Activated CD8-positive, alpha-beta T cell treated with anti-CD3 and anti-CD28 coated beads for 36 hours (primary cell): ENCODE measurements at regions of chr14 and their contacts with region 1.

Region 1: DNA sequence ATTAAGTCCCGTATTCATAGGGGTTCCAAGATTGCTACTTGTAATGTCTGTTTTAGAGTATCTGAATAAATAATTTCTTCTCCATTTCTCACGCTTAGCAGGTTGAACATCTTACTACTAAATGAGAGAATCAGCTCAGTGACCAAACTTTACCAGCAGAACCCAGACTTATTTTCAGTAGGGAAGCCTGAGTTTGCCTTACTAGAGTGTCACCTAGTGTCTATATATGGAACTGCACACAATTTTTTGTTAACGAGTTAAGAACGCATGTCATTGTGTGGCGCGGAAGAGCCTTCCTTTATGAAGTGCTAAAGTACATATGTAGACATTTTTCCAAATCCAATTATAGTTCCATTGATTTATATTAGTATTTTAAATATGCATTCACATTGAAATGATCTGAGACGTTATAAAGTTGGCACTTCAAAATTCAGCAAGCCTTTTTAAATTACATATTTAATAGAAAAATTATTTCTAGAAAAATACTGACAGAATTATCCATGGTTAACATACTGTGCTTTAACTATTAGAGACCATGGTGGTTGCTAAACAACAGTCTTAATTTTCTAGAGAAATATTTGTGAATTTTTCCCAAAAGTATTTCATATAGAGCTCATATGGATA is 88.3 kb downstream of the RPS29 start:
- DNase-seq: peak; percentile 14
- ATAC-seq: peak; percentile 79
- H3K4me3 Mint-ChIP-seq: no peak overlapping the region
- H3K27ac Mint-ChIP-seq: no peak overlapping the region
- H3K4me1 Mint-ChIP-seq: no peaks in the 10 kb centered on the region
- H3K27me3 Mint-ChIP-seq: peaks cover 9% of the 10 kb centered on the region
- CTCF ChIP-seq: peak; percentile 87

Region 2: GRCh38 chr14:49160983-49161382 is 336.9 kb before region 1 on chr14:
- CTCF ChIA-PET with region 1: no interaction called
- POLR2A ChIA-PET with region 1: no interaction called
- intact Hi-C with region 1: no loop called
- DNase-seq: no peak
- ATAC-seq: no peak
- H3K4me3 Mint-ChIP-seq: no peak overlapping the region
- H3K27ac Mint-ChIP-seq: no peak overlapping the region
- H3K4me1 Mint-ChIP-seq: peaks cover 3% of the 10 kb centered on the region
- H3K27me3 Mint-ChIP-seq: no peaks in the 10 kb centered on the region
- CTCF ChIP-seq: no peak

Region 3: GRCh38 chr14:49483268-49483667 is 14.6 kb before region 1 on chr14:
- CTCF ChIA-PET with region 1: interaction called, 20 read pairs
- POLR2A ChIA-PET with region 1: no interaction called
- intact Hi-C with region 1: no loop called
- DNase-seq: no peak
- ATAC-seq: no peak
- H3K4me3 Mint-ChIP-seq: no peak overlapping the region
- H3K27ac Mint-ChIP-seq: no peak overlapping the region
- H3K4me1 Mint-ChIP-seq: peaks cover 5% of the 10 kb centered on the region
- H3K27me3 Mint-ChIP-seq: no peaks in the 10 kb centered on the region
- CTCF ChIP-seq: no peak

Region 4: GRCh38 chr14:49512147-49512551 is 14.3 kb after region 1 on chr14:
- CTCF ChIA-PET with region 1: interaction called, 10 read pairs
- POLR2A ChIA-PET with region 1: no interaction called
- intact Hi-C with region 1: no loop called
- DNase-seq: no peak
- ATAC-seq: no peak
- H3K4me3 Mint-ChIP-seq: no peak overlapping the region
- H3K27ac Mint-ChIP-seq: no peak overlapping the region
- H3K4me1 Mint-ChIP-seq: no peaks in the 10 kb centered on the region
- H3K27me3 Mint-ChIP-seq: peaks cover 3% of the 10 kb centered on the region
- CTCF ChIP-seq: no peak

Region 5: GRCh38 chr14:49528049-49528448 is 30.2 kb after region 1 on chr14:
- CTCF ChIA-PET with region 1: no interaction called
- POLR2A ChIA-PET with region 1: no interaction called
- intact Hi-C with region 1: no loop called
- DNase-seq: no peak
- ATAC-seq: no peak
- H3K4me3 Mint-ChIP-seq: no peak overlapping the region
- H3K27ac Mint-ChIP-seq: no peak overlapping the region
- H3K4me1 Mint-ChIP-seq: no peaks in the 10 kb centered on the region
- H3K27me3 Mint-ChIP-seq: no peaks in the 10 kb centered on the region
- CTCF ChIP-seq: no peak

Region 6: GRCh38 chr14:49538926-49539325 is 41.1 kb after region 1 on chr14:
- CTCF ChIA-PET with region 1: no interaction called
- POLR2A ChIA-PET with region 1: no interaction called
- intact Hi-C with region 1: no loop called
- DNase-seq: no peak
- ATAC-seq: no peak
- H3K4me3 Mint-ChIP-seq: no peak overlapping the region
- H3K27ac Mint-ChIP-seq: no peak overlapping the region
- H3K4me1 Mint-ChIP-seq: no peaks in the 10 kb centered on the region
- H3K27me3 Mint-ChIP-seq: no peaks in the 10 kb centered on the region
- CTCF ChIP-seq: no peak